Activated CD4-positive, alpha-beta memory T cell treated with anti-CD3 and anti-CD28 coated beads, Interleukin-2, amount 10 ng/mL, durations not matched to agents 7 days and 5 days (primary cell): ENCODE measurements at regions of chr1 and their contacts with region 1.

Region 1: GRCh38 chr1:3453203-3453761 is 1.2 kb upstream of the ARHGEF16 start:
- DNase-seq: peak; percentile 69
- H3K4me3 Mint-ChIP-seq: no peak overlapping the region
- H3K27ac Mint-ChIP-seq: no peak overlapping the region
- H3K4me1 Mint-ChIP-seq: peaks cover 4% of the 10 kb centered on the region
- H3K27me3 Mint-ChIP-seq: peaks cover 18% of the 10 kb centered on the region

Region 2: DNA sequence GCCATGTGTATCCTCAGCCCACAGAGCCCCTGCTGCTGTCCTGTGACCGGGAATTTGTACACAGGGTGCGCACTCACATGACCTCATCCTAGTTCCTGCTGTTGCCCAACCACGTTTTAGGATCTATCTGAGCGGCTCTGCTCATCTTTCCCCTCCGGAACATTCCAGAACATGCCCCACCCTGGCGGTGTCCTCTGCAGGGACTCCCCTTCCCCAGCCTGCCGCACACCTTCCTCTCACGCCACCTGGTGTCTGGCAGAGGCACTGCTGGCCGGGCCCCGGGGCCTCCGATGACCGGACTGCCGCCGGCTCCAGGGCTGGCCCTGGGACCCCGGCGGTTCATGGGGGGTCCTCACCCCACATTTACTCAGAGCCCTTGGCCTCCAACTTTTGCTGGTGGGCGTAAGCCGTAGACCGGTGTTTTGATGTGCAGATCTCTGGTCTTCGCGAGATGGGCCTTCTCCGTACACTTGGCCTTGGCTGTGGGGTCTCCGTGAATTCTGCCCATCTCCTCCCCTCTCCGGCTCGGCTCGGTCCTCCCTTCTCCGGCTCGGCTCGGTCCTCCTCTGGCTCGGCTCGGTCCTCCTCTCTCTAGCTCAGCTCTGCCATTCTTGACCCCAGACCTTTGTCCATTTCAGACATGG is 30.6 kb after region 1 on chr1:
- CTCF ChIA-PET with region 1: interaction called, 13 read pairs
- POLR2A ChIA-PET with region 1: no interaction called
- DNase-seq: peak; percentile 41
- H3K4me3 Mint-ChIP-seq: no peak overlapping the region
- H3K27ac Mint-ChIP-seq: no peak overlapping the region
- H3K4me1 Mint-ChIP-seq: no peaks in the 10 kb centered on the region
- H3K27me3 Mint-ChIP-seq: no peaks in the 10 kb centered on the region

Region 3: DNA sequence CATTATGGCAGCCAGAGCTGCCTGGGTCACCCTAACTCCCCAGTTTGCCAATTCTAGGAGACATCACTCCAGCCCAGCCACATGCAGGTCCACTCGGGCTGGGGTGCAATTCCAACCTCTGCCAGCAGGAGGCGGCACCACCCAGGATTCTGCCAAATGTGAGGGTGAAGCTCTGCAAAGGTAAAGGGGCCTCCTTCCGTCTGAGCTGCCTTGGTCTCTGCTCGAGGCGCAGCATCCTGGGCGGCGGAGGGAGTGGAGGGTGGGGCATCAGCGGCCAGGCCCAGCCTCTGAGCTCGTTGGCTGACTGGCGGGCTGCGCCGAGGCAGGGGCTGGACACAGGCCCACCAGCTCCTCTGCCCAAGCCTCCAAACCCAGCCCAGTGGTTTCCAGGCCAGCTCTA is 65.0 kb after region 1 on chr1:
- CTCF ChIA-PET with region 1: no interaction called
- POLR2A ChIA-PET with region 1: no interaction called
- DNase-seq: peak; percentile 34
- H3K4me3 Mint-ChIP-seq: no peak overlapping the region
- H3K27ac Mint-ChIP-seq: no peak overlapping the region
- H3K4me1 Mint-ChIP-seq: no peaks in the 10 kb centered on the region
- H3K27me3 Mint-ChIP-seq: no peaks in the 10 kb centered on the region